ENCODE measurements at regions of chr13 and their contacts with region 1.

Region 1: GRCh38 chr13:60431108-60431700 is 34.2 kb downstream of the TDRD3 start:
- DNase-seq: peak; percentile 30
- ATAC-seq: no peak
- H3K4me3 ChIP-seq: no peak overlapping the region
- H3K27ac ChIP-seq: no peak overlapping the region
- H3K4me1 ChIP-seq: no peaks in the 10 kb centered on the region
- H3K27me3 ChIP-seq: no peaks in the 10 kb centered on the region
- CTCF ChIP-seq: peak; percentile 76; the same call in 1 of the 2 replicates

Region 2: DNA sequence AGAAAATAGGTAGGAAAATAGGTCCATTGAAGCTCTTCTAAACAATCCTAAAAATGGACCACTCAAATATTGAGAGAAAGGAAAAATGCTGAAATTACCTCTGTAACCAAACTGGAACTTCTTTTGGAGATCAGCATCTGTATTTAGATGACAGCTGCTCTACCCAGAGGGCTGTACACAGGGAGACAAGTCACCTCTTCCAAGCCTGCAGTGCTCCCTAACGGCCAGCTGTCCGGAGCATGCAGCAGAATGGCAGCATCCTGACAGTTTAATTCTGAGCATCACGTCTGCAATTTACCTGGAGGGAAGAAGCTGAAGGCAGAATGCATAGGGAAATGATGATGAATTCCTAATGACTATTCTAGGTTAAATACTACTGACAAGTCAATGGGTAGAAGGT is 204.7 kb before region 1 on chr13:
- CTCF ChIA-PET with region 1: no interaction called
- POLR2A ChIA-PET with region 1: no interaction called
- in situ Hi-C with region 1: no loop called
- intact Hi-C with region 1: loop called (anchors 10 kb)
- DNase-seq: no peak
- ATAC-seq: no peak
- H3K4me3 ChIP-seq: no peak overlapping the region
- H3K27ac ChIP-seq: no peak overlapping the region
- H3K4me1 ChIP-seq: no peaks in the 10 kb centered on the region
- H3K27me3 ChIP-seq: no peaks in the 10 kb centered on the region; the same call in 1 of the 2 replicates
- CTCF ChIP-seq: peak; percentile 46

Region 3: DNA sequence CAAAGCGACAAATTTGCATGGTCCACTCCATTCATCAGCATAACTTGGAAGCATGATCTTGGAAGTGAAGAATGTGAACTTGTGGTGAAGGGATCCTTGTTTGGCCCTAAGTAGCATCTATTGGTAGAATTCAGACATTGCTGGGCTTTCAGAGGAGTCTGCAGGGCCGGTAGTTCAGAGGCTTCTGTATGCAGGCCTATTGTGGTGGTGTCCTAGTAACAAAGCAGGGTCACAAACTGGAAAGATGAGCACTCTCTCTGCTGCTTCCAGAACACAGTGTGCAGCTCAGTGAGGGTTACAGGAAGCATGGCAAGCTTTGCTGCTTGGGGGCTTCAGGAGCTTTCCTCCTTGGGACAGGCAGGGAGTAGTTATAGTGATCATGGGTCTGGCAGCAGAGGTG is 171.8 kb after region 1 on chr13:
- CTCF ChIA-PET with region 1: no interaction called
- POLR2A ChIA-PET with region 1: no interaction called
- in situ Hi-C with region 1: no loop called
- intact Hi-C with region 1: no loop called
- DNase-seq: no peak
- ATAC-seq: no peak
- H3K4me3 ChIP-seq: no peak overlapping the region
- H3K27ac ChIP-seq: no peak overlapping the region
- H3K4me1 ChIP-seq: no peaks in the 10 kb centered on the region
- H3K27me3 ChIP-seq: no peaks in the 10 kb centered on the region
- CTCF ChIP-seq: no peak